Right cardiac atrium (tissue), 5 donors: ENCODE measurements at regions of chr6 and their contacts with region 1.

Region 1: DNA sequence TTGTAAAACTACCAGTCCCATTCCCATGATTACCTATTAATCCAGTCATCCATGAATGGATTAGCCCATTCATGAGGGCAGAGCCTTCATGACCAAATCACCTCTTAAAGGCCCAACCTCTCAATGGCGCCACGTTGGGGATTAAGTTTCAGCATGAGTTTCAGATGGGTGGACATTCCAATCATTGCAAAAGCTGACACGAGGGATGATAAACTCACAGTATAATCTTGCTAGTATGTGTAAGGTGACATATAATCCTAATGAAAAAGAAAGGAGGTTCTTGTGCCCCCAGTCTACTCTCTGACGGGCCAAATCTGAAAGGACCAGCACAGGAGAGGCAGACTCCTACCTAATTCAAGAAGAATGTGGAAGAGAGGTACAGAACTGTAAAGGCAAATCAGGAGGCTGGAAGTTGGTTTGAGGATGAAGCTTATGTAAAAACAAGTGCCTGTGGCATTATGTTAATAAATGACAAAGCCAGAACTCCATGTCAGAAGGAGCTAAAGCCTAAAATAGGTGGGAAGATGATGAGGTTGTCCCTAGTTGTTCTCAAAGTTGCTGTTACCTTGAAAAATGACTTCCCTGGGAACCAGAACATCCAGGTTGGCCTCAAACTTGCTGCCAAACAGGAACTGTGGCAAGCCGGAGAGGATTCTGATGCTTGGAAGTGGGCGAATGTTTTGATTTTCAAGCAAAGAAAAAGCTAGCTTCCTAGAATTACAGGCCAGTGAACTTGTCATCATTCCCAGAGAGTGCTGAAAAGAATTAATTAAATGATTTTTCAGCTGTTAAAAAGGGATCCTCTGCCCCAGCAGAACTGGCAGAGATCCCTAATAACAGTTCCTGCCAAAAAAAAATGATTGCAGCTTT is 106.5 kb upstream of the TIAM2 start:
- DNase-seq: no peak
- ATAC-seq: no peak
- H3K4me3 ChIP-seq: no peak overlapping the region
- H3K27ac ChIP-seq: no peak overlapping the region
- H3K4me1 ChIP-seq: peaks cover 11% of the 10 kb centered on the region
- H3K27me3 ChIP-seq: no peaks in the 10 kb centered on the region

Region 2: GRCh38 chr6:155041741-155042279 is 153.1 kb after region 1 on chr6:
- intact Hi-C with region 1: no loop called
- DNase-seq: peak in 2 of 3 donors; percentile 43 to 75
- ATAC-seq: peak in 1 of 2 donors; percentile 46
- H3K4me3 ChIP-seq: no peak overlapping the region
- H3K27ac ChIP-seq: no peak overlapping the region
- H3K4me1 ChIP-seq: no peaks in the 10 kb centered on the region
- H3K27me3 ChIP-seq: no peaks in the 10 kb centered on the region

Region 3: DNA sequence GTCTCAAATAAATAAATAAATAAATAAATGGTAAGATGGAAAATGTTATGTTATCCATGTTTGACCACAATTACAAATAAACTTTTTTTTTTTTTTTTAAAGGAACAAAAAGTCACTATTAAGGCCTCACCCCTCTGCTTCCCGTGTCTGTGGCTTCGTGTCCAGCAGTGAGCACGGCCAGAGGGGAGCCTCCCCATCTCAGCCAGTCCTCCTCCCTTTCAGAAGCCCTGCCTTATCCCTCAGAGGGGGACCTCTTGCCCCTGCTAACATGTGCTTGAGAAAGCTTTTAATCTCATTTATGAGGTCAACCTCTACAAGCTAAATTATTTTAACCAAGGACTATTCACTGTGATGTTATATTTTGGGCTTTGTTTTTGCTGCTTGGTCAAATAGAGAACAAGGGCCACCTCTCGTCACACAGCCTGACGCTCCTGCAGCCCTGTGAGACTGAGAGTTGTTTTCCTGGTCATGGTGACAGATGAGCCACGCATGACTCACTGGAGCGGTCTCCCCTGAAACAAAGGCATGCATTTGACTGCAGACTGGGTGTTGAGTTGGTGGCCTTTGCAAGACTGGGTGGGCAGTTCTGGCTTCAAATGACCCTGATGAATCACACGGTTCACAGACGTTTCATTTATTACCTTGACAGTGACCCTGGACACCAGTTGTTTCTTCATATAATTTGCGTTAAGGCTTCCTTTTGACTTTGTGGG is 238.2 kb after region 1 on chr6:
- intact Hi-C with region 1: no loop called
- DNase-seq: peak in 1 of 3 donors; percentile 22
- ATAC-seq: peak in 1 of 2 donors; percentile 76
- H3K4me3 ChIP-seq: no peak overlapping the region
- H3K27ac ChIP-seq: no peak overlapping the region
- H3K4me1 ChIP-seq: no peaks in the 10 kb centered on the region
- H3K27me3 ChIP-seq: no peaks in the 10 kb centered on the region

Region 4: GRCh38 chr6:155248008-155249001 is 359.6 kb after region 1 on chr6:
- intact Hi-C with region 1: loop called in 1 of 4 experiments (anchors 10 kb)
- DNase-seq: peak in 2 of 3 donors; percentile 31 to 66
- ATAC-seq: peak; percentile 54
- H3K4me3 ChIP-seq: no peak overlapping the region
- H3K27ac ChIP-seq: no peak overlapping the region
- H3K4me1 ChIP-seq: no peaks in the 10 kb centered on the region
- H3K27me3 ChIP-seq: no peaks in the 10 kb centered on the region